Right ventricle myocardium superior (tissue), 1 donor: ENCODE measurements at regions of chr6 and their contacts with region 1.

Region 1: GRCh38 chr6:161393839-161394364 is 120.0 kb upstream of the AGPAT4 start:
- DNase-seq: no peak
- ATAC-seq: peak; percentile 90

Region 2: DNA sequence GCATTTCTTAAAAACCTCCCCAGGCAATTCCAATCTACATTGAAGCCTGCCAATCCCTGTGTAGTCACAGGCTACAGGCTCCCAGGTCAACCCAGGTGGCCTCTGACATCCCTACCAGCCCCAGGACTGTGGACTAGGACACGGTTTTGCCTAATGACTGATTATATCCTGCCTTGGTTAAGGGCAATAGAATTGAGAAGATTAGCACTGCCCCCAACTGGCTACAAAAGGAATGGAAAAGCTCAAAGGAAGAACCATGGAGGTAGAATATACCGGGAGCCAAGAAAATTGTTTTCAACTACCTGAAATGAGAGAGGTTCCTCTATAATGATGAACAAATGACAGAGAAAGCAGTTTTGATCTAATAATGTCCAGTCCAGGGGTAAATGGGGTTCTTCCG is 301.1 kb after region 1 on chr6:
- intact Hi-C with region 1: loop called (anchors 10 kb)
- DNase-seq: no peak
- ATAC-seq: no peak